Endothelial cell of umbilical vein (primary cell): ENCODE measurements at regions of chr9 and their contacts with region 1.

Region 1: GRCh38 chr9:75265525-75265972 is 177.2 kb downstream of the OSTF1 start:
- DNase-seq: peak; percentile 52
- H3K4me3 ChIP-seq: no peak overlapping the region
- H3K27ac ChIP-seq: no peak overlapping the region
- H3K4me1 ChIP-seq: no peaks in the 10 kb centered on the region
- H3K27me3 ChIP-seq: peaks cover 0 to 2% of the 10 kb centered on the region in 2 experiments
- CTCF ChIP-seq: peak; percentile 66 to 74
- POLR2A ChIP-seq: no peak

Region 2: DNA sequence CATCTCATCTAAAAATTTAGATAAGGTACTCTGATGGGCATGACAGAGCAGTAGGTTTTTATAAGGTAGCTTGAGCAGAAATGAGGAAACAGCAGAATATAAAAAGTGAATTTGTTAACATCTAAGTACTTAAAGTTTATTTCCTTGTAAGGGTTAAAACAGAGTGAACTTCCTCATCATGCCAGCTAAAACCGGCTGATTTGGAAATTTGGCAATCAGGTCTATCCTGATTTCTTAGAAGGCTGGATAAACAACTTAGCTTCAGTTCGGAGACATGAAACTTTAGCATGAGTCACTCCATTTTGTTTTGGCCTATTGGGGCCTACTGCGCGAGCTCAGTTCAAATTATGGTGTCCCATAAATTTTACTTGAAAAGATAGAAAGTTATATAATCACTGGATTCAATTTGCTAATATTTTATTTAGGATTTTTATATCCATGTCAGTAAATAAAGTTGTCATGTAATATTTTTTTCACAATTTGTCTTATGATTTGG is 1010.0 kb before region 1 on chr9:
- CTCF ChIA-PET with region 1: no interaction called
- POLR2A ChIA-PET with region 1: no interaction called
- dilution Hi-C with region 1: no loop called
- intact Hi-C with region 1: no loop called
- DNase-seq: no peak
- H3K4me3 ChIP-seq: no peak overlapping the region
- H3K27ac ChIP-seq: no peak overlapping the region
- H3K4me1 ChIP-seq: no peaks in the 10 kb centered on the region
- H3K27me3 ChIP-seq: no peaks in the 10 kb centered on the region
- CTCF ChIP-seq: no peak
- POLR2A ChIP-seq: no peak

Region 3: GRCh38 chr9:75197561-75197960 is 68.0 kb before region 1 on chr9:
- CTCF ChIA-PET with region 1: no interaction called
- POLR2A ChIA-PET with region 1: no interaction called
- dilution Hi-C with region 1: no loop called
- intact Hi-C with region 1: no loop called
- DNase-seq: peak; percentile 36
- H3K4me3 ChIP-seq: no peak overlapping the region
- H3K27ac ChIP-seq: no peak overlapping the region
- H3K4me1 ChIP-seq: no peaks in the 10 kb centered on the region
- H3K27me3 ChIP-seq: peaks cover 0 to 3% of the 10 kb centered on the region in 2 experiments
- CTCF ChIP-seq: no peak
- POLR2A ChIP-seq: no peak

Region 4: GRCh38 chr9:76127637-76128036 is 862.1 kb after region 1 on chr9:
- CTCF ChIA-PET with region 1: no interaction called
- POLR2A ChIA-PET with region 1: no interaction called
- dilution Hi-C with region 1: no loop called
- intact Hi-C with region 1: loop called (anchors 5 kb)
- DNase-seq: no peak
- H3K4me3 ChIP-seq: no peak overlapping the region
- H3K27ac ChIP-seq: no peak overlapping the region
- H3K4me1 ChIP-seq: no peaks in the 10 kb centered on the region
- H3K27me3 ChIP-seq: no peaks in the 10 kb centered on the region
- CTCF ChIP-seq: no peak
- POLR2A ChIP-seq: no peak